Heart right ventricle (tissue), 16 donors: ENCODE measurements at regions of chr1 and their contacts with region 1.

Region 1: GRCh38 chr1:233613252-233614174 is at the start of gene KCNK1:
- DNase-seq: peak; percentile 32 to 59
- ATAC-seq: peak; percentile 67 to 89 (median 80)
- H3K4me3 ChIP-seq: peak within 1 kb of the TSS; percentile 54 to 71 (median 64)
- H3K27ac ChIP-seq: peak within 1 kb of the TSS in 9 of 10 donors; percentile 28 to 75 (median 63)
- H3K4me1 ChIP-seq: peaks cover 0 to 12% (median 0%) of the 10 kb centered on the region in 9 donors
- H3K27me3 ChIP-seq: peaks cover 0 to 55% (median 19%) of the 10 kb centered on the region in 7 donors
- CTCF ChIP-seq: no peak
- total RNA-seq, gene KCNK1: 5.0 to 29.5 (median 15.2) TPM

Region 2: DNA sequence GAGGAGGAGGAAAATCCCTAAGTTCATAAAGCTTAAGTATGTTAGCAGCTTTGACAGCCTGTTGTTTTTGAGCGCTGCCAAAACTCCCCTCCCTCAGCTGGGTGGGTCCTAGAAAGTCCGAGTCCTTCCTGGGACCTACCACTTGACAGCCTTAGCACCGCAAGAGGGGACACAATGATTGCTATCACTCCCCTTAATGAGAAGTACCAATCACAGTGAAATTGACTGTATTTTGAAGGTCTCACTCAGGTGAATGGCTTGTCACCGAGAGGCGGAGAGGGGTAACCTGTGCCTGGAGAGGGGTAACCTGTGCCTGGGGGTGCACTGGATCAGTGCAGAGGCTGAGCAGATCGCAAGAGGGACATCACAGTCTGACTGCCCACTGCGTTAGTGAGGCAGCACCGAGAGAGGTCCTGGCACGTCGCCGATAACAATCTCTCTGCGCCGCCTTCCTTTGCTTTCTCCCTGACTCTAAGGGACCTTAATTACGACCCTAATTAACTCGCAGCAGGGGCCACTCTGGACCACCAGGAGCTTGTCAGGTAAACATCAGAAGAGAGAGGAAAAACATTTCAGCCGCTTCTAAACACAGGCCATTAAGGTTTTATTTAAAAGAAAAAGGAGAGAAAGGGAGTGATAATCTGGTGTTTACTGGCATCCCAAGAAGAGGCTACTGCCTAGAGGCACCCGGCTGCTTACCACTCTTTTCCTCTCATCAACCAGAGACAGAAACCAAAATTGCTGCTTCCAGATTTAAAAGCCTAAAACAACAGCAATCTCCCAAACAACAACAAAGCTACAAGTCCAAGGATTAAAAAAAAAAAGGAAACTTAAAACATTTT is 25.3 kb before region 1 on chr1:
- intact Hi-C with region 1: no loop called
- DNase-seq: peak in 1 of 2 donors; percentile 17
- ATAC-seq: no peak
- H3K4me3 ChIP-seq: no peak overlapping the region
- H3K27ac ChIP-seq: no peak overlapping the region
- H3K4me1 ChIP-seq: no peaks in the 10 kb centered on the region
- H3K27me3 ChIP-seq: peaks cover 0 to 12% (median 0%) of the 10 kb centered on the region in 7 donors
- CTCF ChIP-seq: no peak

Region 3: GRCh38 chr1:233668725-233669294 is 55.3 kb after region 1 on chr1:
- intact Hi-C with region 1: loop called in 1 of 10 experiments (anchors 10 kb)
- DNase-seq: no peak
- ATAC-seq: peak in 7 of 8 donors; percentile 63 to 90 (median 78)
- H3K4me3 ChIP-seq: no peak overlapping the region
- H3K27ac ChIP-seq: peak overlapping the region in 9 of 10 donors; percentile 32 to 79 (median 64)
- H3K4me1 ChIP-seq: peaks cover 0 to 32% (median 12%) of the 10 kb centered on the region in 9 donors
- H3K27me3 ChIP-seq: no peaks in the 10 kb centered on the region
- CTCF ChIP-seq: no peak

Region 4: DNA sequence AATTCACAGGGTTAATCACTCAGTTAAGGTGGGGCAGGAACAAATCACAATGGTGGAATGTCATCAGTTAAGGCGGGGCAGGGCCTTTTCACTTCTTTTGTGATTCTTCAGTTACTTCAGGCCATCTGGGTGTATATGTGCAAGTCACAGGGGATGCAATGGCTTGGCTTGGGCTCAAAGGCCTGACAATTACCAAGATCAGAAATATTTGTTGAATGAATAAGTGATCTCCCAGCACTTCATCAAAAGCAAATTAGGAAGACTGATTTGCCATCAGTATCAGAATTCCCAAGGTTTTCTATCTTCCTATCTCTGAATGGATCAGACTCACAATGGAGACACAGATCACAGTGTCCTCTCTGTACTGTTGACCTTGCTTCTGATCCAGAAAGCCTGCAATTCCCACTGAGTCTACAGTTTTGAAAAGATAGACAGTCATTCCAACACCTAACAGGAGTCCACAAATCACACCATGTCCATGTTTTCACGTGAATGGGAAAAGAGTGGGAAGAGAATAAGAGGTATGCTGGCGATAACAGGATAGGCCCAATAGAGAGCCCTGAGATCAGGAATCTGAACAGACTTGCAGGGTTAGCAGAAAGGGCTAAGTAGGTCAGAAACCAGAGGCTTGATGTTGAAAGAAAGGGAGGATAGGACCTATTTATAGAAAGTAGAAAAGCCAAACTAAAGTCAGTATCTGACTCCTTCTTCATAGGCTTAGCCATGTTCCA is 75.7 kb after region 1 on chr1:
- intact Hi-C with region 1: no loop called
- DNase-seq: no peak
- ATAC-seq: no peak
- H3K4me3 ChIP-seq: no peak overlapping the region
- H3K27ac ChIP-seq: no peak overlapping the region
- H3K4me1 ChIP-seq: peaks cover 0 to 11% (median 3%) of the 10 kb centered on the region in 9 donors
- H3K27me3 ChIP-seq: no peaks in the 10 kb centered on the region
- CTCF ChIP-seq: no peak

Region 5: DNA sequence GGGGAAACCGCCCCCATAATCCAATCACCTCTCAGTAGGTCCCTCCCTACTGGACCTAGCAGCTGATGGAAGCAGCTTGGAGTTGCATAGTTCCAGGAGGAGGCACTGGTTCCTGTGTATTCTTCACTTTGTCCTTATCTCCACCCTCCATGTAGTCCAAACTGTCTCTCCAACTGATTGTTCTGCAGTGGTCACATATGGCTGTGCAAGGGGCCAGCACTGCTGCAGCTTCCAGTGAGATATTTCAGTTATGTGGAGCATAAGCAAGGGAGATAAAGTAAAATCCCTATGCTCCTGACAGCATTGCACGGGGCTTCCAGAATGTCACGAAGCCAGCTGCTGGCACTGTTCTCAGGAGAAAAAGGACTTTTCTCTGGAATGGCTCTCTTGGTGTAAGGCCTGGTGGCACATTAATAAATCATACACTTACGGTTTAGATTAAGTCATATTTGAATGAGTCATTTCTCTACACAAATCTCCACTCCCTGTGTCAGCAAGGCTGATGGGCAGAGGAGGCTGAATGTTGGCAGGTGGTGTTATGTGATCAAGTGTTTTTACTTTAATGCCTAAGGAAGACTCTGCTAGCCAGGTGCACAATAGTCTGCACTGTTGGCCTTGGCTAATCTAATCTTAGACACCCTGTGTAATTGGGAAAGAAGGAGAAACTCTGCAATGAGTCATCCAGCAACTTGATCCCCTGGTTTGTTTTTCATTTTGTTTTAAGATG is 93.8 kb after region 1 on chr1:
- intact Hi-C with region 1: loop called in 1 of 10 experiments (anchors 10 kb)
- DNase-seq: no peak
- ATAC-seq: peak in 7 of 8 donors; percentile 29 to 72 (median 48)
- H3K4me3 ChIP-seq: no peak overlapping the region
- H3K27ac ChIP-seq: peak overlapping the region in 2 of 10 donors; percentile 32 to 49
- H3K4me1 ChIP-seq: peaks cover 0 to 14% (median 10%) of the 10 kb centered on the region in 9 donors
- H3K27me3 ChIP-seq: no peaks in the 10 kb centered on the region
- CTCF ChIP-seq: no peak

Region 6: DNA sequence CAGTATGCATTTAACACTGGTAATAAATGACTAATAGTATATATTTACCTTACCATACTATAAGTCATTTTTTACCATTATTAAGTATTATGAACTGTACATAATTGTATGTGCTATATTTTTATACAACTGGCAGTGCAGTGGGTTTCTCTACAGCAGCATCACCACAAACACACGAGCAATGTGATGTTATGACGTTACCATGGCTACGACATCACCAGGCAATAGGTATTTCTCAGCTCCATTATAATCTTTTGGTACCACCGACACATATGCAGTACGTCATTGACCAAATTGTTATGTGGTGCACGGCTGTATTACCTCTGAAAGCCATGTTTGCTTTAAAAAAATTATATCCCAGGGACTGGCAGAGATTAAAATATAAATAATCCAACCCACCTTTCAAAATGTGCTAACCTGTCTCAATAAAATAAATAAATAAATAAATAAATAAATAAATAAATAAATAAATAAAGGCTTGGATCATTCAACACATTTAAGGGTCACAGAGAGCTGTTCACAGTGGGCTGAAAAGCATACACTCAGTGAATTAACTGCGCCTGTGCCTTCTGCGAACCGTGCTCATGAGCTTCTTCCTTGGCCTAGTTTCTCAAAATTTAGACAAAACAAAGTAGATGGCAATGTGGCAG is 169.5 kb after region 1 on chr1:
- intact Hi-C with region 1: loop called in 1 of 10 experiments (anchors 10 kb)
- DNase-seq: no peak
- ATAC-seq: no peak
- H3K4me3 ChIP-seq: no peak overlapping the region
- H3K27ac ChIP-seq: no peak overlapping the region
- H3K4me1 ChIP-seq: no peaks in the 10 kb centered on the region
- H3K27me3 ChIP-seq: no peaks in the 10 kb centered on the region
- CTCF ChIP-seq: no peak